GM10248 (cell line): ENCODE measurements at regions of chr5 and their contacts with region 1.

Region 1: GRCh38 chr5:151534350-151534749 is 56.8 kb downstream of the FAT2 start:
- DNase-seq: no peak
- CTCF ChIP-seq: no peak

Region 2: GRCh38 chr5:151523335-151523734 is 11.0 kb before region 1 on chr5:
- CTCF ChIA-PET with region 1: interaction called, 15 read pairs
- POLR2A ChIA-PET with region 1: no interaction called
- DNase-seq: peak; percentile 75
- CTCF ChIP-seq: peak; percentile 54